ENCODE measurements at regions of chr20 and their contacts with region 1.

Region 1: DNA sequence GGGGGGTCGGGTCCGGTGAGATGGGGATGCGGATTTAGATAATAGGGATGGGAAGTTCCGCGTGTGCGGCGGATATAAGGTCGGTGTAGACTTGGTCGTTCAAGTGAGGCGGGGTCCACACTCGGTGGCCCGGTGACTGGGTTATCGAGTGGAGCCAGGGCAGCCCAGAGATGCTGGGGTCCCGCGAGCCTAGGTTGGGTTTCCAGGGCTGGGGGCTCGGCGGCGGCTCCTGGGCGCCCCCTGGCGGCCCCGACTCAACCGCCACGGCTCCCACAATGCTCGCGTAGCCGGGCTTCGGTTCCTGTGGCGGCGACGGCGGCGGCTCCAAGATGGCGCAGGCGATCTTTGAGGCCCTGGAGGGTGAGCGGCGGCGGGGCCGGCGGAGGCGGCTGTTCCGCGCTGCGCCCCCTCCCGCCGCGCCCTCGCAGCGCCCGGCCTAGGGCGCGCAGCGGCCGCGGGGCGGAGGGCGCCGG is at the start of gene ZNF341:
- DNase-seq: peak; percentile 82 to 94 (median 89)
- ATAC-seq: peak; percentile 94
- H3K4me3 ChIP-seq: peak within 1 kb of the TSS; percentile 49
- H3K27ac ChIP-seq: peak within 1 kb of the TSS; percentile 75
- H3K4me1 ChIP-seq: peaks cover 20 to 33% of the 10 kb centered on the region in 2 experiments
- H3K27me3 ChIP-seq: no peaks in the 10 kb centered on the region
- CTCF ChIP-seq: peak; percentile 82 to 93 (median 89)
- EP300 ChIP-seq: no peak
- POLR2A ChIP-seq: no peak
- RAD21 ChIP-seq: peak; percentile 86 to 89
- polyA plus RNA-seq, gene ZNF341: 0.08 to 0.10 TPM

Region 2: DNA sequence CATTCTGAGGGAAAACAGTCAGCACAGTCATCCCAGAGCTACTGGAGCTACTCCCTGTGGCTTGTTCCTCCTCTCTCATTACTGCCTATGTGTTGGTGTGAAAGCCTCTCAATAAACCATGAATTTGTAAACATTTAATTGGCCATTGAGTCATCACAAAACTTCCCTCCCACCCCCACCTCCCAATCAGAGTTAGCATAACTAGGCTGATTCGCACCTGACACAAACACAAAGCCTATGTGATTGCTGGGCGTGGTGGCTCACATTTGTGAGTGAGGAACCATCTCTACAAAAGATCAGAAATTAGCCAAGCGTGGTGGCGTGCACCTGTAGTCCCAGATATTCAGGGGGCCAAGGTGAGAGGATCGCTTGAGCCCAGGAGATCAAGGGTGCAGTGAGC is 271.0 kb before region 1 on chr20:
- CTCF ChIA-PET with region 1: no interaction called
- POLR2A ChIA-PET with region 1: no interaction called
- in situ Hi-C with region 1: loop called (anchors 5 kb)
- intact Hi-C with region 1: no loop called
- DNase-seq: no peak
- ATAC-seq: no peak
- H3K4me3 ChIP-seq: no peak overlapping the region
- H3K27ac ChIP-seq: no peak overlapping the region
- H3K4me1 ChIP-seq: peaks cover 0 to 3% of the 10 kb centered on the region in 2 experiments; a peak in 3 of 5 replicates
- H3K27me3 ChIP-seq: no peaks in the 10 kb centered on the region
- CTCF ChIP-seq: no peak
- EP300 ChIP-seq: no peak
- POLR2A ChIP-seq: no peak
- RAD21 ChIP-seq: no peak

Region 3: GRCh38 chr20:33506576-33506975 is 225.2 kb before region 1 on chr20:
- CTCF ChIA-PET with region 1: no interaction called
- POLR2A ChIA-PET with region 1: no interaction called
- in situ Hi-C with region 1: no loop called
- intact Hi-C with region 1: no loop called
- DNase-seq: no peak
- ATAC-seq: no peak
- H3K4me3 ChIP-seq: no peak overlapping the region
- H3K27ac ChIP-seq: no peak overlapping the region
- H3K4me1 ChIP-seq: no peaks in the 10 kb centered on the region; a peak in 1 of 5 replicates
- H3K27me3 ChIP-seq: no peaks in the 10 kb centered on the region
- CTCF ChIP-seq: no peak
- EP300 ChIP-seq: no peak
- POLR2A ChIP-seq: no peak
- RAD21 ChIP-seq: no peak

Region 4: GRCh38 chr20:33666293-33667244 is 65.2 kb before region 1 on chr20 and contains the start of gene ACTL10:
- CTCF ChIA-PET with region 1: interaction called, 3 read pairs
- POLR2A ChIA-PET with region 1: interaction called, 3 read pairs
- in situ Hi-C with region 1: loop called (anchors 5 kb)
- intact Hi-C with region 1: loop called (anchors 2 kb)
- DNase-seq: peak; percentile 82 to 98 (median 88)
- ATAC-seq: peak; percentile 89
- H3K4me3 ChIP-seq: no peak within 1 kb of the TSS
- H3K27ac ChIP-seq: peak within 1 kb of the TSS; percentile 41; the same call in 2 of the 3 replicates
- H3K4me1 ChIP-seq: peaks cover 21 to 63% of the 10 kb centered on the region in 2 experiments; a peak in 4 of 5 replicates
- H3K27me3 ChIP-seq: no peaks in the 10 kb centered on the region
- CTCF ChIP-seq: peak; percentile 56 to 67 (median 61); a peak in 5 of 6 replicates
- EP300 ChIP-seq: peak; percentile 12; the same call in 1 of the 2 replicates
- POLR2A ChIP-seq: peak; percentile 47; the same call in 1 of the 2 replicates
- RAD21 ChIP-seq: peak; percentile 48 to 56
- polyA plus RNA-seq, gene ACTL10: not detected

Region 5: GRCh38 chr20:33810885-33811777 is 79.4 kb after region 1 on chr20 and contains the start of gene CHMP4B:
- CTCF ChIA-PET with region 1: no interaction called
- POLR2A ChIA-PET with region 1: no interaction called
- in situ Hi-C with region 1: no loop called
- intact Hi-C with region 1: loop called (anchors 5 kb)
- DNase-seq: peak; percentile 96 to 99 (median 96)
- ATAC-seq: peak; percentile 98
- H3K4me3 ChIP-seq: peak within 1 kb of the TSS; percentile 92
- H3K27ac ChIP-seq: peak within 1 kb of the TSS; percentile 84
- H3K4me1 ChIP-seq: peaks cover 7 to 22% of the 10 kb centered on the region in 2 experiments
- H3K27me3 ChIP-seq: no peaks in the 10 kb centered on the region
- CTCF ChIP-seq: peak in 1 of 3 experiments; percentile 8; a peak in 1 of 6 replicates
- EP300 ChIP-seq: peak; percentile 33; the same call in 1 of the 2 replicates
- POLR2A ChIP-seq: no peak
- RAD21 ChIP-seq: no peak
- polyA plus RNA-seq, gene CHMP4B: 1.8 to 2.5 TPM